Activated CD4-positive, alpha-beta T cell treated with anti-CD3 and anti-CD28 coated beads, Interleukin-2, amount 10 ng/mL, durations not matched to agents 24 days and 14 days (primary cell): ENCODE measurements at regions of chr14 and their contacts with region 1.

Region 1: GRCh38 chr14:92783816-92784431 is 10.2 kb upstream of the GOLGA5 start:
- DNase-seq: peak; percentile 82
- H3K4me3 Mint-ChIP-seq: no peak overlapping the region
- H3K27ac Mint-ChIP-seq: no peak overlapping the region
- H3K4me1 Mint-ChIP-seq: peaks cover 19% of the 10 kb centered on the region
- H3K27me3 Mint-ChIP-seq: peaks cover 4% of the 10 kb centered on the region

Region 2: DNA sequence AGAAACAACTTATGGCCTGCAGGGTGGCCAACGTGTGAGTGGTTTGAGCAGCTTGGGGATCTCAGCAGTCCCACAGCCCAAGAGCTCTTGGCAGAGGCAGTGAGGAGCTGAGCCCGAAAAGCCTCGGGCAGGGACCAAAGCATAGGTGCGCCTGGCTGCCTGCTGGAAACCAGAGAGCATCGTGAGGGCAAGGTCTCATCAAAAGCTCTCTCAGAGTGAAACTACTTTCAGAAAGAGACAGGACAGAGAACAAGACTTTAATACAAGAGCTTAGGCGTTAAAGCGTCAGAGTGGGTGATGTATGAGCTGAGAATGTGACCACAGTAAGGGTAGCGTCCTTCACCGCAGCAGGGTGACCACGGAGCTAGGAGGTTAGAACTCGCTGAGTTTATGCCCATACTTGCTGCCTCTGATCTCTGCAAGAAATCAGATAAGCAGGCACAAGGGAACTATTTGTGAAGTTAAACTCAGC is 66.3 kb before region 1 on chr14:
- intact Hi-C with region 1: loop called (anchors 1 kb)
- DNase-seq: no peak
- H3K4me3 Mint-ChIP-seq: no peak overlapping the region
- H3K27ac Mint-ChIP-seq: no peak overlapping the region
- H3K4me1 Mint-ChIP-seq: peaks cover 2% of the 10 kb centered on the region
- H3K27me3 Mint-ChIP-seq: peaks cover 14% of the 10 kb centered on the region